PC-3 (cell line): ENCODE measurements at regions of chr13 and their contacts with region 1.

Region 1: GRCh38 chr13:29923554-29924481 is 73.4 kb upstream of the UBL3 start:
- DNase-seq: peak; percentile 97
- ATAC-seq: peak; percentile 88
- H3K4me3 ChIP-seq: peak overlapping the region; percentile 51
- H3K27ac ChIP-seq: peak overlapping the region; percentile 92
- H3K4me1 ChIP-seq: peaks cover 74% of the 10 kb centered on the region
- H3K27me3 ChIP-seq: no peaks in the 10 kb centered on the region
- CTCF ChIP-seq: peak; percentile 97

Region 2: GRCh38 chr13:29746148-29746677 is 177.6 kb before region 1 on chr13:
- CTCF ChIA-PET with region 1: no interaction called
- POLR2A ChIA-PET with region 1: no interaction called
- intact Hi-C with region 1: no loop called
- DNase-seq: no peak
- ATAC-seq: no peak
- H3K4me3 ChIP-seq: no peak overlapping the region
- H3K27ac ChIP-seq: no peak overlapping the region
- H3K4me1 ChIP-seq: no peaks in the 10 kb centered on the region
- H3K27me3 ChIP-seq: 0 out of 2 replicates have a peak, but pooled peaks cover 4% of the 10 kb centered on the region
- CTCF ChIP-seq: no peak

Region 3: GRCh38 chr13:29758531-29759114 is 165.2 kb before region 1 on chr13:
- CTCF ChIA-PET with region 1: no interaction called
- POLR2A ChIA-PET with region 1: no interaction called
- intact Hi-C with region 1: loop called (anchors 2 kb)
- DNase-seq: peak; percentile 91
- ATAC-seq: peak; percentile 90
- H3K4me3 ChIP-seq: peak overlapping the region; percentile 54; the same call in 1 of the 2 replicates
- H3K27ac ChIP-seq: peak overlapping the region; percentile 97
- H3K4me1 ChIP-seq: peaks cover 32% of the 10 kb centered on the region
- H3K27me3 ChIP-seq: no peaks in the 10 kb centered on the region
- CTCF ChIP-seq: no peak

Region 4: GRCh38 chr13:29771247-29771646 is 152.6 kb before region 1 on chr13:
- CTCF ChIA-PET with region 1: interaction called, 9 read pairs
- POLR2A ChIA-PET with region 1: no interaction called
- intact Hi-C with region 1: loop called (anchors 1 kb)
- DNase-seq: peak; percentile 70
- ATAC-seq: peak; percentile 50
- H3K4me3 ChIP-seq: no peak overlapping the region
- H3K27ac ChIP-seq: no peak overlapping the region
- H3K4me1 ChIP-seq: no peaks in the 10 kb centered on the region
- H3K27me3 ChIP-seq: no peaks in the 10 kb centered on the region
- CTCF ChIP-seq: peak; percentile 73

Region 5: DNA sequence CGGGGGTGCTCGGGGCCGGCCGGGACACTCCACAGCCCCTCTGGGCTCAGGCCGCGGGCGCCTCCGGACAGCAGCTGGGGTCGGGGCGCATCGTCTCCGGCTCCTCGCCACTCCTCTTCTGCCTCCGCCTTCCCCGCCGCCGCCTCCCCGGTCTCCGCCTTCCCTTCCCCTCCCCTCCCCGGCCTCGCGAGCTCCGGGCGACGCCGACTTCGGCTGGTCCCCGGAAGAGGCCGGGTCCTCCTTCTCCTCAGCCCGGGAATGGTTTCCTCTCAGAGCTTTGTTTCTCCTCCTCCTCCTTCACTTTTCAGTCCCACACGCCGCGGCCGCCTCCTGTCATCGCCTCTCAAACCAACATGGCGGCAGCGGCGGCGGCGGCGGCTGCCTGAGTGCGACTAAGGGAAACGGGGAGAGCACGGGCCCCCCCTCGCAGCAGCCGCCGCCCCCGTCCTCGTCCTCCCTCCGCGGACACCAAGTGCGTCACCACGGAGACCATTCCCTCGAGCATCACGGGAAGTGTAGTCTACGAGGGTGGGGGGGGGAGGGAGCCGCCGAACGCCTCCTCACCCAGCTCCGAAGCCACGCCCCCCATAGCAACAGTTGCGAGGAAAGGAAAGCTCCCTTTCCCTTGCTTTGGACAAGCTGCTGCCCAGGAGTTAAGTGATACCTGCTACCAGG is 73.5 kb before region 1 on chr13 and contains the start of gene UBL3:
- CTCF ChIA-PET with region 1: interaction called, 16 read pairs
- POLR2A ChIA-PET with region 1: interaction called, 14 read pairs
- intact Hi-C with region 1: loop called (anchors 1 kb)
- DNase-seq: peak; percentile 93
- ATAC-seq: peak; percentile 72
- H3K4me3 ChIP-seq: peak within 1 kb of the TSS; percentile 94
- H3K27ac ChIP-seq: peak within 1 kb of the TSS; percentile 82
- H3K4me1 ChIP-seq: peaks cover 40% of the 10 kb centered on the region
- H3K27me3 ChIP-seq: no peaks in the 10 kb centered on the region
- CTCF ChIP-seq: no peak
- total RNA-seq, gene UBL3: 10.9 and 13.9 TPM in 2 replicates

Region 6: GRCh38 chr13:29868581-29868980 is 55.2 kb before region 1 on chr13:
- CTCF ChIA-PET with region 1: no interaction called
- POLR2A ChIA-PET with region 1: no interaction called
- intact Hi-C with region 1: loop called (anchors 5 kb)
- DNase-seq: no peak
- ATAC-seq: peak; percentile 59
- H3K4me3 ChIP-seq: no peak overlapping the region
- H3K27ac ChIP-seq: no peak overlapping the region
- H3K4me1 ChIP-seq: no peaks in the 10 kb centered on the region
- H3K27me3 ChIP-seq: no peaks in the 10 kb centered on the region
- CTCF ChIP-seq: no peak

Region 7: GRCh38 chr13:30033681-30034457 is 110.1 kb after region 1 on chr13:
- CTCF ChIA-PET with region 1: interaction called, 3 read pairs
- POLR2A ChIA-PET with region 1: no interaction called
- intact Hi-C with region 1: loop called (anchors 1 kb)
- DNase-seq: peak; percentile 69
- ATAC-seq: peak; percentile 95
- H3K4me3 ChIP-seq: no peak overlapping the region
- H3K27ac ChIP-seq: 0 out of 2 replicates have a peak overlapping the region, but pooled peaks have one; percentile 27
- H3K4me1 ChIP-seq: peaks cover 17% of the 10 kb centered on the region
- H3K27me3 ChIP-seq: no peaks in the 10 kb centered on the region
- CTCF ChIP-seq: no peak

Region 8: GRCh38 chr13:30114571-30115256 is 190.9 kb after region 1 on chr13:
- CTCF ChIA-PET with region 1: interaction called, 10 read pairs
- POLR2A ChIA-PET with region 1: interaction called, 4 read pairs
- intact Hi-C with region 1: loop called (anchors 1 kb)
- DNase-seq: peak; percentile 87
- ATAC-seq: peak; percentile 77
- H3K4me3 ChIP-seq: peak overlapping the region; percentile 72
- H3K27ac ChIP-seq: no peak overlapping the region
- H3K4me1 ChIP-seq: peaks cover 25% of the 10 kb centered on the region
- H3K27me3 ChIP-seq: no peaks in the 10 kb centered on the region
- CTCF ChIP-seq: peak; percentile 87